Activated CD4-positive, alpha-beta memory T cell treated with anti-CD3 and anti-CD28 coated beads, Interleukin-2, amount 10 ng/mL, durations not matched to agents 7 days and 5 days (primary cell): ENCODE measurements at regions of chr11 and their contacts with region 1.

Region 1: DNA sequence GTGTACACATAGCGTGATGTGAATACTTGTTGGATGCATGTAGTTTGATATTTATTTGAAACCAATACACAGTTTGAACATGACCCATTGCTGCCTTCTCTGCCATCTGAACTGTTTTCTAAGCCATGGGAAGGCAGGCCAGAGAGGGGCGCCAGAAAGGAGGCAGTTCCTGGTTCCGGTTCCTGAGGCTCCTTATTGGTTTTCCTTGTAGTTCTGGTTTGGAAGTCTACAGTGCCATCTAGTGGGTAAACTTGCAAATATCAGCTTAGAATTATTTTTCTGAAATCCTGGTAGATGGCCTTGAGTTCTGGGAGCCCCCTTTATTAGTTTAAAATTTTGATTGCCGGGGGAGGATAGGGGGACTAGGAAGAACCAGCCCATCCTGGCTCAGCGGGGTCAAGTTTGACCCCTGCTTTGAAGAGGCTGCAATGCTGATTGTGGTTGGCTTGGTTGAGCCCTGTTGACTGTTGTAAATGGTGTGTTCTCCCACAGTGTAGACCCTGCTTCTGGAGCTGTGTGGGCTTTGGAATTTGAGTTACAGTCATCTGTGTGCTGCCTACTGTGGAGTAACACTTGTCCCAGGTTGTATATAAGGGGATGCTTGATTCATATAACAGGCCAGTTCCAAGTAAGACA is 48.4 kb downstream of the GRAMD1B start:
- DNase-seq: peak; percentile 39
- H3K4me3 Mint-ChIP-seq: peak overlapping the region; percentile 29
- H3K27ac Mint-ChIP-seq: peak overlapping the region; percentile 69
- H3K4me1 Mint-ChIP-seq: peaks cover 67% of the 10 kb centered on the region
- H3K27me3 Mint-ChIP-seq: no peaks in the 10 kb centered on the region

Region 2: GRCh38 chr11:123301696-123302400 is 176.6 kb before region 1 on chr11:
- CTCF ChIA-PET with region 1: interaction called, 73 read pairs
- POLR2A ChIA-PET with region 1: no interaction called
- DNase-seq: peak; percentile 78
- H3K4me3 Mint-ChIP-seq: peak overlapping the region; percentile 56
- H3K27ac Mint-ChIP-seq: peak overlapping the region; percentile 59
- H3K4me1 Mint-ChIP-seq: peaks cover 47% of the 10 kb centered on the region
- H3K27me3 Mint-ChIP-seq: peaks cover 3% of the 10 kb centered on the region

Region 3: DNA sequence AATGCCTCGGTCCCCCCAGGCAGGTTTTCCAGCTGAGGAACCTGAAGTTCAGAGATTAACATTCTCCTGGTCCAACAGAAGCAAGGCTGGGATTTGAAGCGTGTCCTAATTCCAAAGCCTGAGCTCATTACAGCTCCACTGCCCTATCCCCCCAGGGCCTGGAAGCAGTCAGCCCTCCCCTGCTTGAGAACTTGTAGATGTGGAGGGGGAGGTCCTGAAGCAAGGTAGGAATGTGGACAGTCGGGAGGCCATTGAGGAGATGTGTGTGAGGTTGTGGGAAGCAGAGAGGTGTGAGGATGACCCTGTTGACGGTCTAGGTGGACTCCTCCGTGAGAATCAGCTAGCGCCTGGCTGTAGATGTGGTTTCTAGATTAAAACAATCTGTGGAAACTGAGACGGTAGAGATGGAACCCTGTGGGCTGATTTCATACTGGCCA is 40.3 kb before region 1 on chr11:
- CTCF ChIA-PET with region 1: interaction called, 32 read pairs
- POLR2A ChIA-PET with region 1: interaction called, 4 read pairs
- DNase-seq: no peak
- H3K4me3 Mint-ChIP-seq: peak overlapping the region; percentile 45
- H3K27ac Mint-ChIP-seq: peak overlapping the region; percentile 86
- H3K4me1 Mint-ChIP-seq: peaks cover 93% of the 10 kb centered on the region
- H3K27me3 Mint-ChIP-seq: no peaks in the 10 kb centered on the region

Region 4: GRCh38 chr11:123450623-123451022 is 27.8 kb before region 1 on chr11:
- CTCF ChIA-PET with region 1: no interaction called
- POLR2A ChIA-PET with region 1: no interaction called
- DNase-seq: no peak
- H3K4me3 Mint-ChIP-seq: no peak overlapping the region
- H3K27ac Mint-ChIP-seq: peak overlapping the region; percentile 85
- H3K4me1 Mint-ChIP-seq: peaks cover 92% of the 10 kb centered on the region
- H3K27me3 Mint-ChIP-seq: no peaks in the 10 kb centered on the region

Region 5: GRCh38 chr11:123461164-123461563 is 17.3 kb before region 1 on chr11:
- CTCF ChIA-PET with region 1: interaction called, 14 read pairs
- POLR2A ChIA-PET with region 1: interaction called, 3 read pairs
- DNase-seq: no peak
- H3K4me3 Mint-ChIP-seq: no peak overlapping the region
- H3K27ac Mint-ChIP-seq: no peak overlapping the region
- H3K4me1 Mint-ChIP-seq: peaks cover 63% of the 10 kb centered on the region
- H3K27me3 Mint-ChIP-seq: no peaks in the 10 kb centered on the region

Region 6: GRCh38 chr11:123654566-123655081 is 176.2 kb after region 1 on chr11 and contains the start of gene SCN3B:
- CTCF ChIA-PET with region 1: no interaction called
- POLR2A ChIA-PET with region 1: no interaction called
- DNase-seq: no peak
- H3K4me3 Mint-ChIP-seq: peak within 1 kb of the TSS; percentile 48
- H3K27ac Mint-ChIP-seq: no peak within 1 kb of the TSS
- H3K4me1 Mint-ChIP-seq: peaks cover 21% of the 10 kb centered on the region
- H3K27me3 Mint-ChIP-seq: peaks cover 49% of the 10 kb centered on the region
- total RNA-seq, gene SCN3B: 0.03 TPM in 1 of 2 experiments, not detected in the other